ENCODE measurements at regions of chr5 and their contacts with region 1.

Region 1: GRCh38 chr5:157816682-157817386 is 42.1 kb downstream of the CLINT1 start:
- DNase-seq: no peak
- ATAC-seq: no peak
- H3K4me3 ChIP-seq: no peak overlapping the region
- H3K4me1 ChIP-seq: peaks cover 8% of the 10 kb centered on the region
- CTCF ChIP-seq: no peak

Region 2: DNA sequence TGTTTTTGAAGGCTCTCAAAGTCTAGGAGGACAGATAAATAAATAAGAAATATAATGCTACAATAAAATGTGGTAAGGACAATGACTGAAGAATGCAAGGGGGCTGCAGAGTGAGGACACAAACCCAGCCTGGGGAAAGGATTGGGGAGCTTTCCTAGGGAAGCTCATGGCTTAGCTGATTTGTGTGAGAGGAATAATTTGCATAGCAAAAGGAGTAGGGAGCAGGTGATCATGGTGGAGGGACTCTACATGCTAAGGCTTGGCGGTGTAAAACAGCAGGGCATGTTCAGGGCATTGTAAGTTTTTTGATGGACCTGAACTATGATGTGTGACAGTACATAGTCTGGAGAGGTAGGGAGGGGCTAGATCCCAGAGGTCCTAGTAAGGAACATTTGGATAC is 91.6 kb after region 1 on chr5:
- intact Hi-C with region 1: loop called in 1 of 2 experiments (anchors 5 kb)
- DNase-seq: no peak
- ATAC-seq: no peak
- H3K4me3 ChIP-seq: no peak overlapping the region
- H3K4me1 ChIP-seq: peaks cover 11% of the 10 kb centered on the region
- CTCF ChIP-seq: no peak

Region 3: GRCh38 chr5:157994906-157995519 is 178.2 kb after region 1 on chr5:
- intact Hi-C with region 1: loop called (anchors 5 kb)
- DNase-seq: peak; percentile 58 to 79 (median 77)
- ATAC-seq: peak; percentile 99
- H3K4me3 ChIP-seq: no peak overlapping the region
- H3K4me1 ChIP-seq: no peaks in the 10 kb centered on the region
- CTCF ChIP-seq: peak; percentile 43